GM12878 (cell line): ENCODE measurements at regions of chr5 and their contacts with region 1.

Region 1: DNA sequence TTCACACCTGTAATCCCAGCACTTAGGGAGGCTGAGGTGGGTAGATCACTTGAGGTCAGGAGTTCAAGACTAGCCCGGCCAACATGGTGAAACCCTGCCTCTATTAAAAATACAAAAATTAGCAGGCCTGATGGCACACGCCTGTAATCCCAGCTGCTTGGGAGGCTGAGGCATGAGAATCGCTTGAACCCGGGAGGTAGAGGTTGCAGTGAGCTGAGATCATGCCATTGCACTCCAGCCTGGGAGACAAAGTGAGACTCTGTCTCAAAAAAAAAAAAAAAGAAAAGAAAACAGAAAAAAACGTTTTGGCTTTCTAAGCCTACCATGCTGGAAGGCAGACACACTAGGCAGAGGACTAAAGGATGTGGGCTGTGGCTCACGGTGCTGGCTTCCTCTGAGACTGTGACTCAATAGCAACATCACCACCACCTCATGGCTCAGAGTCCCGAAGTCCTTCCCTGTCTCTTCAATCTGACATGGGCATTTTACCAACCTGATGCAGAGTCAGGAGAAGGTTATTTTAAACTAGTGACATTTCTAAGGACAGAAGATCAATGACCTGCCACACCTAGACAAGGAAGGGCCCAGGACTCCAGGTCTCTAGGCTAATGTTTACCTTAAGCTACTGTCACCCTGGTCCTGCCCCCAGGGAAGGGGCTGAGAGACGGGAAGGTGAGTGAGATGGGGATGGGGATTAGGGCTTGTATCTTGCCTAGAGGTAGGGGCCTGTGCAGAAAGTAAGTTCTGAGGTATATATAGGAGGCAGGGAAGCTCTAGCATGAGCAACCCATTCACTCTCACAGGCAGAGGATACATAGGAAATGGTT is 3.8 kb downstream of the ECSCR start:
- DNase-seq: peak; percentile 60
- ATAC-seq: peak; percentile 70
- H3K4me3 ChIP-seq: no peak overlapping the region
- H3K27ac ChIP-seq: peak overlapping the region; percentile 93
- H3K4me1 ChIP-seq: peaks cover 45% of the 10 kb centered on the region
- H3K27me3 ChIP-seq: no peaks in the 10 kb centered on the region
- CTCF ChIP-seq: no peak
- EP300 ChIP-seq: no peak
- POLR2A ChIP-seq: no peak
- RAD21 ChIP-seq: no peak

Region 2: GRCh38 chr5:138832218-138832617 is 626.6 kb before region 1 on chr5:
- CTCF ChIA-PET with region 1: no interaction called
- POLR2A ChIA-PET with region 1: no interaction called
- RAD21 ChIA-PET with region 1: no interaction called
- SMC1A ChIA-PET with region 1: no interaction called
- in situ Hi-C with region 1: no loop called
- intact Hi-C with region 1: no loop called
- DNase-seq: no peak
- ATAC-seq: no peak
- H3K4me3 ChIP-seq: no peak overlapping the region
- H3K27ac ChIP-seq: no peak overlapping the region
- H3K4me1 ChIP-seq: no peaks in the 10 kb centered on the region
- H3K27me3 ChIP-seq: no peaks in the 10 kb centered on the region
- CTCF ChIP-seq: no peak
- EP300 ChIP-seq: no peak
- POLR2A ChIP-seq: no peak
- RAD21 ChIP-seq: no peak

Region 3: DNA sequence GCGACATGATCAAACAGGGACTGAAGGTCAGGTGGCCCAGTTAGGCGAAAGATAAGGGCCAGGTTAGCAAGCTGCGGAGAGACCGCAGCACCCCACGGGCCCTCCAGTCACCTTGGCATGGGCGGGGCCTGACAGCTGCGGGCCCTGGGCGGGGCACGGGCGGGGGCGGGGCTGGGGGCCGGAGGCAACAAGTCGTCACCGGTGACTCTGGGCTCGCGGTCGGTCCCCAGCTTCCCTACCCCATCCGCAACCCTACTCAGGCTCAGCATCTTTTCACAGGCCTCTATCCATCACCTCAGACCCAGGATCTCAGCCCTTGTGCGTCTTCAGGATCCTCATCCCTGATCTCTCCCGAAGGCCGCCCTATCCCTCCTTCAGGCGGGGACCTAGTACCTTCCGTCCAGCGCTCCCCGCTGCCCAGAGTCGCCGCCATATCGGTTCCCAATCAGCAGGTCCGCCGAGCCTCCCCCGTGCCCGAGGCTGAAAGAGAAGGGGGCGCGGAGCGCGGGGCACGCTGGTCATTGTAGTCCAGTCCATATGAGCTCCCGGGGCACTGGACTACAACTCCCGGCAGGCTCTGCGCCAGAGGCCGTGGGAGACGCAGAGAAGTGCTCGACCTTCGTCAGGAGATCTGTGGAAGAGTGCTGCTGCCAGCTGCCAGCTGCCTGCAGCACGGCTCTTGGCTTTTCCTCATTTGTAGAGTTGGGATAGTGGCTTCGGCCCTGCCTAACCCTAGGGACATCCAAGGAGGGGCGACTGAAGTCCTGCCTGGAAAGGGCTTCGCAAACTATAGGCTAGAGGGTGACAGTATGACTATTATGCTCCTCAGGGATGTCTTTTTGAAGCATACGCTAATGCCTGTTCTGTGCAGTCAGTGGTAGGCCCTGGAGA is 19.5 kb before region 1 on chr5 and contains the start of gene DNAJC18:
- CTCF ChIA-PET with region 1: interaction called, 26 read pairs
- POLR2A ChIA-PET with region 1: interaction called, 53 read pairs
- RAD21 ChIA-PET with region 1: interaction called, 47 read pairs
- SMC1A ChIA-PET with region 1: interaction called, 16 read pairs
- in situ Hi-C with region 1: no loop called
- intact Hi-C with region 1: loop called (anchors 1 kb)
- DNase-seq: peak; percentile 53
- ATAC-seq: peak; percentile 81
- H3K4me3 ChIP-seq: peak within 1 kb of the TSS; percentile 84
- H3K27ac ChIP-seq: peak within 1 kb of the TSS; percentile 95
- H3K4me1 ChIP-seq: peaks cover 24% of the 10 kb centered on the region
- H3K27me3 ChIP-seq: no peaks in the 10 kb centered on the region
- CTCF ChIP-seq: no peak
- EP300 ChIP-seq: no peak
- POLR2A ChIP-seq: peak; percentile 74
- RAD21 ChIP-seq: 0 out of 2 replicates have a peak, but pooled peaks have one; percentile 3
- polyA plus RNA-seq, gene DNAJC18: 20.5 to 26.7 TPM

Region 4: DNA sequence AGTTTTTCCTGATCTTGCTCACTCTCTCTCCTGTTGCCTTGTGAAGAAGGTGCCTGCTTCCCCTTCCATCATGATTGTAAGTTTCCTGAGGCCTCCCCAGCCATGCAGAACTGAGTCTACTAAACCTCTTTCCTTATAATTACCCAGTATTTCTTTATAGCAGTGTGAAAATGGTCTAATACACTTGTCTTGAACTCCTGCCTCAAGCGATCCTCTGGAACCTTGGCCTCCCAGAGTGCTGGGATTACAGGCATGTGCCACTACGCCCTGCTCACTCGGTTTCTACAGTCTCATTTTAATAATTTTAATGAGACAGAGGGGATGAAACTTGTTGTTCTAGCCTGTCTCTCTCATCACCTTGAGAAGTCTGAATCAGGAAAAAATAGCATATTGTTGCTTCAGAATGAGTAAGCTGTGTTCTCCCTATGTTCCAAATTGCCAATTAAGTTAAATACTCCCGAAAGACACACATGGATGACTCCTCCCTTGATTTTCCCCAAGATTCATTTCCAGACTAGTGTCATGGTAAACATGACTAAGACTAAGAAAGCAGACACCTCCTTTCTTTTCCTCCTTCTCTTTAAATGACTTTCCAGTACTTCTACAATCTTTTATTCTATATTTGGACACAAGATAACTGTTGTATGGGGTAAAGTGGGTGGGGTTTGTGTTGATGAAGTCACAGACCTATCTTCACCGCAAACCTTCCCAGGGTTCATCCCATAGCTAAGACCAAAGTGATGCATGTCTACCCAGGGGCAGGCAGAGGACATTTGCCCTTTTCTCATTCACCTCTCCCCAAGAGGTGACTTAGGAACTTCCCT is 11.6 kb before region 1 on chr5:
- CTCF ChIA-PET with region 1: interaction called, 16 read pairs
- POLR2A ChIA-PET with region 1: interaction called, 22 read pairs
- RAD21 ChIA-PET with region 1: interaction called, 18 read pairs
- SMC1A ChIA-PET with region 1: interaction called, 25 read pairs
- in situ Hi-C with region 1: no loop called
- intact Hi-C with region 1: no loop called
- DNase-seq: peak; percentile 87
- ATAC-seq: peak; percentile 85
- H3K4me3 ChIP-seq: no peak overlapping the region
- H3K27ac ChIP-seq: peak overlapping the region; percentile 68
- H3K4me1 ChIP-seq: peaks cover 29% of the 10 kb centered on the region
- H3K27me3 ChIP-seq: no peaks in the 10 kb centered on the region
- CTCF ChIP-seq: no peak
- EP300 ChIP-seq: peak; percentile 94 to 97
- POLR2A ChIP-seq: no peak
- RAD21 ChIP-seq: no peak

Region 5: DNA sequence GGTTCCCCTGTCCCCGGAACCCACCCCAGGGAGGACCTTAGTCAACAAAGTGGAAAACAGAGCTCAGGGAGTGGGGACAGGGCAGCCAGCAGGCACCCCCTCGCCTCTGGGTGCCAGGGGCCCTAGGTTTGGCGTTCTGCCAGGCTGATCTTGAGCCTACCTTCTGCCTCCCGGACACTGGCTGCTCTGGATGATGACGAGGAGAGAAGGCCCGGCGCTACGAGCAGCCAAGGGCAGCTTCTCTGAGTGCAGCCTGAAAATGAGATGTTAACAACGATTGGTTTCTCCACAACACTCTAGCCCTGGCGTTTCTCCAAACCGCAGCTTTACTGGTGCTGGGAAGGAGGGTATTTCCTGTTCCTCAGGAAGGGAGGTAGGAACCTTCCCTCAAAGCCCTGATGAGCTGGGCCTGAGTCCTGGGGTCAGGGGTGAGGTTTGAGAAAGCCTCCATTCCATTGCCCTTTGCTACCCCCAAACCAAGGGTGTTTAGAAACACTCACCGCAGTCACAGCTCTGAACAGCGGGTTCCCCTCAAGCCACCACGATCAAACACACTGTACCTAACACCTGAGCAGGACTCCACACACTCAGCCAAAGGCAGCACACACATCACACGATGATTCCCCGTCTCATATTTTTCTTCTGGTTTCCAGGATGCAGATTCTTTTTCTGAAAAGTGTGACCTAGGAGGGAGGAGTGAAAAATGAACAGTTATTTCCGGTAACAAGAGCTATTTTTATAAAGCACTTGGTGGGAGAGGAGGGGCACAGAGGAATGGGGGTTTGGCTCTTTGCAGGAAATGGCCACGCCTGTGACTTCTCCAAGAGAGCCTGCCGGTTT is 23.5 kb after region 1 on chr5 and contains the start of gene STING1:
- CTCF ChIA-PET with region 1: interaction called, 19 read pairs
- POLR2A ChIA-PET with region 1: interaction called, 8 read pairs
- RAD21 ChIA-PET with region 1: interaction called, 12 read pairs
- SMC1A ChIA-PET with region 1: interaction called, 13 read pairs
- in situ Hi-C with region 1: no loop called
- intact Hi-C with region 1: loop called (anchors 1 kb)
- DNase-seq: peak; percentile 41
- ATAC-seq: peak; percentile 75
- H3K4me3 ChIP-seq: peak within 1 kb of the TSS; percentile 59
- H3K27ac ChIP-seq: peak within 1 kb of the TSS; percentile 91
- H3K4me1 ChIP-seq: peaks cover 27% of the 10 kb centered on the region
- H3K27me3 ChIP-seq: no peaks in the 10 kb centered on the region
- CTCF ChIP-seq: no peak
- EP300 ChIP-seq: no peak
- POLR2A ChIP-seq: peak; percentile 29
- RAD21 ChIP-seq: no peak
- polyA plus RNA-seq, gene STING1: 10.1 to 12.1 TPM

Region 6: GRCh38 chr5:139524932-139525585 is 66.3 kb after region 1 on chr5:
- CTCF ChIA-PET with region 1: no interaction called
- POLR2A ChIA-PET with region 1: interaction called, 12 read pairs
- RAD21 ChIA-PET with region 1: interaction called, 7 read pairs
- SMC1A ChIA-PET with region 1: interaction called, 7 read pairs
- in situ Hi-C with region 1: no loop called
- intact Hi-C with region 1: no loop called
- DNase-seq: no peak
- ATAC-seq: peak; percentile 88
- H3K4me3 ChIP-seq: 0 out of 2 replicates have a peak overlapping the region, but pooled peaks have one; percentile 2
- H3K27ac ChIP-seq: peak overlapping the region; percentile 59
- H3K4me1 ChIP-seq: peaks cover 28% of the 10 kb centered on the region
- H3K27me3 ChIP-seq: no peaks in the 10 kb centered on the region
- CTCF ChIP-seq: no peak
- EP300 ChIP-seq: 0 out of 4 replicates have a peak, but pooled peaks of 1 of the 2 experiments have one; percentile 24
- POLR2A ChIP-seq: no peak
- RAD21 ChIP-seq: no peak

Region 7: GRCh38 chr5:139660923-139661814 is 202.4 kb after region 1 on chr5:
- CTCF ChIA-PET with region 1: no interaction called
- POLR2A ChIA-PET with region 1: no interaction called
- RAD21 ChIA-PET with region 1: no interaction called
- SMC1A ChIA-PET with region 1: no interaction called
- in situ Hi-C with region 1: no loop called
- intact Hi-C with region 1: loop called (anchors 5 kb)
- DNase-seq: no peak
- ATAC-seq: peak; percentile 46
- H3K4me3 ChIP-seq: peak overlapping the region; percentile 14; the same call in 1 of the 2 replicates
- H3K27ac ChIP-seq: peak overlapping the region; percentile 67
- H3K4me1 ChIP-seq: peaks cover 97% of the 10 kb centered on the region
- H3K27me3 ChIP-seq: no peaks in the 10 kb centered on the region
- CTCF ChIP-seq: no peak
- EP300 ChIP-seq: no peak
- POLR2A ChIP-seq: no peak
- RAD21 ChIP-seq: no peak